ENCODE measurements at regions of chr4 and their contacts with region 1.

Region 1: GRCh38 chr4:81505004-81505598 is 33.4 kb upstream of the RASGEF1B start:
- DNase-seq: peak; percentile 86
- H3K4me3 Mint-ChIP-seq: peak overlapping the region; percentile 25
- H3K27ac Mint-ChIP-seq: peak overlapping the region; percentile 37
- H3K4me1 Mint-ChIP-seq: peaks cover 42% of the 10 kb centered on the region
- H3K27me3 Mint-ChIP-seq: no peaks in the 10 kb centered on the region

Region 2: DNA sequence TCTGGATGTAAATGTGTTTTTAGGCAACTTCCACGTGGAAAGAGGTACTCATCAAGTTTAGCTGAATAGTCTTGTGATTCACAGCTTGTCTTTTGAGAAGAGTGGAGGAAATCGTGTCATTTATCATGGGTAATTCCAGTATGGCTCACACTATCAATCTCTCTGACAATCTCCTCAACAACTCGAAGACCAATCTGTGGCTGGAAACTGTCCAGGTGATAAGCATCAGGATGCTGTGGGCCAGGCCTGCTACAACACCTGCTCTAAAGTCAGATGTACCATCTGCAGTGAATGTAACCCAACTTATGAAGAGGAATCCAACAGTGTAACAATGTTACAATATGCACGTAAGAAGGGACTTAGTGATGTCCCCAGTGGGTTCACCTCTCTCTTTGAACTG is 1965.0 kb before region 1 on chr4:
- CTCF ChIA-PET with region 1: no interaction called
- intact Hi-C with region 1: no loop called
- DNase-seq: no peak
- H3K4me3 Mint-ChIP-seq: no peak overlapping the region
- H3K27ac Mint-ChIP-seq: no peak overlapping the region
- H3K4me1 Mint-ChIP-seq: no peaks in the 10 kb centered on the region
- H3K27me3 Mint-ChIP-seq: no peaks in the 10 kb centered on the region

Region 3: GRCh38 chr4:81494031-81494431 is 11.1 kb before region 1 on chr4:
- CTCF ChIA-PET with region 1: interaction called, 3 read pairs
- intact Hi-C with region 1: loop called (anchors 1 kb)
- DNase-seq: no peak
- H3K4me3 Mint-ChIP-seq: no peak overlapping the region
- H3K27ac Mint-ChIP-seq: peak overlapping the region; percentile 30
- H3K4me1 Mint-ChIP-seq: peaks cover 46% of the 10 kb centered on the region
- H3K27me3 Mint-ChIP-seq: no peaks in the 10 kb centered on the region

Region 4: GRCh38 chr4:81562093-81562492 is 57.0 kb after region 1 on chr4:
- CTCF ChIA-PET with region 1: no interaction called
- intact Hi-C with region 1: loop called (anchors 1 kb)
- DNase-seq: no peak
- H3K4me3 Mint-ChIP-seq: no peak overlapping the region
- H3K27ac Mint-ChIP-seq: no peak overlapping the region
- H3K4me1 Mint-ChIP-seq: peaks cover 21% of the 10 kb centered on the region
- H3K27me3 Mint-ChIP-seq: no peaks in the 10 kb centered on the region

Region 5: GRCh38 chr4:81589262-81589661 is 84.2 kb after region 1 on chr4:
- CTCF ChIA-PET with region 1: no interaction called
- intact Hi-C with region 1: loop called (anchors 1 kb)
- DNase-seq: no peak
- H3K4me3 Mint-ChIP-seq: no peak overlapping the region
- H3K27ac Mint-ChIP-seq: no peak overlapping the region
- H3K4me1 Mint-ChIP-seq: peaks cover 19% of the 10 kb centered on the region
- H3K27me3 Mint-ChIP-seq: no peaks in the 10 kb centered on the region

Measured in activated naive CD4-positive, alpha-beta T cell treated with anti-CD3 and anti-CD28 coated beads for 36 hours (primary cell).